Cardiac septum (tissue), 1 donor: ENCODE measurements at regions of chr10 and their contacts with region 1.

Region 1: DNA sequence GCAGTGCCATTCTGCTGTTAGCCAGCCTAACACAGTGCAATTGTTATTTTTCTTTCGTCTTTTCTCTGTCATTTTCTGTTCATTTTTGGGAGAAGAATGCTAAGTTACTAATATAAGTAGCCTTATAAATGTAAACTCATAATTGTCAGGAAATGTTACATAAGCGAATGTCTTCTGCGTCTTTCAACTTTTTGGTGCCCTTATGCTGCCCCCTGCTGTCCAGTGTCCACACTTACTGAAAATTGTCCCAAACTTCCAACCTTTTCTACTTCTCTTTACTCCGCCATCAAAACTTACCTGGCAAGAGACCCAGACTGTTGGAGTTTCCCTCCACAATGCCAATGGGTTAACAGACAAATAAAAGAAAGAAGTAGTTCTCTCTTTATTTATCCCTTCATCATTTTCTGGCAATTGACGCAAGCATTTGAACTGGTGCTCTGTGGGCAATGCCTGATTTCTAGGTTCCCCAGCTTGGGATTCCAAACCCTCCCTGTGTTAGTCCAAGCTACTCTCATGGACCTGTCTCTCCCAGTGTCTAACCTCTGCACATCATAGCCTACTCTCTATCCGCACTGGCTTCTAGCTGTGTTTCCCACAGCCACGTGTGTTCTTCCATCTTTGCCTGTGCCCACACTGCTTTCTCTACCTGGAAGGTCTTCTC is 21.0 kb upstream of the EPC1 start:
- DNase-seq: peak; percentile 80

Region 2: DNA sequence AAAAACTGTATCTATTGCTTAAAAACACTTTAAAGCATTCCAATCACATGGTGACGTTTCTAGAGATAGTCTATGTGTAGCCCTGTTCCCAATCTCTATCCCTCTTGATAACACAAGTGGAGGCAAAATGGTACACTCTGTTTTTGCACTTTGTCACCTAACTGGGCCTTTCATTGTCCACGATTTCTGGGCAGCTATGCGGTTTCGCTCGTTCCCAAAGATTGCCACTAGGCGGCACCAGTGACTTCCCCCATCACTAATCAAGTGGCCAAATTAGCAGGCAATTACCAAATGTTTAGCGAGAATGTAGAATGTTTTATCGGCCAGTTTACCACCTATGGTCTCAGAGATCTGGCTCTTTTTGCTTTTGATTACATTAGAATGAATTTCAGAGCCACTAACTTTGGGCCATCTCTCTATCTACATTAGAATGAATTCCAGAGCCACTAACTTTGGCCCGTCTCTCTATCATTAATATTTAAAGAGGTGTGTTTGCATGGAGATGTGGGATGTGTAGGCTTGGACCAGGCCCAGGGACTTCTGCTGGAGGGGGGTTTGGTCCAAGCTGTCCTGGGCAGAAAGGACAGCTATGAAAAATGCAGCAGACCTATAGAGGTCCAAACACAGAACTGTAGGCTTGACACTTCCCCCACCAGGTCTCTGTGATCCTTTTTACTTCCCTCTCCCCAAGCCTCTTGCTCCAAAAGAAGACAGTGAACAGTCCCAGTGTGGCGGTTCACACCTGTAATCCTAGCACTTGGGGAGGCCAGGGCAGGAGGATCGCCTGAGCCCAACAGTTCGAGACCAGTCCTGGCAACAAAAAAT is 111.1 kb before region 1 on chr10:
- intact Hi-C with region 1: loop called (anchors 5 kb)
- DNase-seq: peak; percentile 85